Psoas muscle (tissue), 8 donors: ENCODE measurements at regions of chr1 and their contacts with region 1.

Region 1: DNA sequence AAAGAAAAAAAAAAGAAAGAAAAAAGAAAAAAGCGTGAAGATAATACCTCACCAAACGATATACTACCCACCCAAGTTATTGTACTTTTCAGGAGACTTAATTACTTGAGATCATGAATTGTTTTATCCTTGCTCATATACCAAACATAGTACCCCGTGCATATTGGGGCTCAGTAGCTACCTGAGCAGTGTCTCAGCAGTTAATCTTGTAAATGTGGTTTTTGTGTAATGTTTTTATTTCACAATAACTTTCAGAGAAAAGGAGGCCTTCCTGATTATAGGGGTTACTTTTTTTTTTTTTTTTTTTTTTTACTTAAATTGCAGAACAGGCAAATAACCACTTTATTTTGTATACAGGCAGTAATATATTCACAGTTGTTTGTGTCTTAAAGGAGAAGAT is 80.3 kb downstream of the OSBPL9 start:
- DNase-seq: no peak
- ATAC-seq: no peak
- H3K4me3 ChIP-seq: no peak overlapping the region
- H3K27ac ChIP-seq: no peak overlapping the region
- H3K4me1 ChIP-seq: peaks cover 45% of the 10 kb centered on the region
- H3K27me3 ChIP-seq: no peaks in the 10 kb centered on the region
- CTCF ChIP-seq: no peak

Region 2: DNA sequence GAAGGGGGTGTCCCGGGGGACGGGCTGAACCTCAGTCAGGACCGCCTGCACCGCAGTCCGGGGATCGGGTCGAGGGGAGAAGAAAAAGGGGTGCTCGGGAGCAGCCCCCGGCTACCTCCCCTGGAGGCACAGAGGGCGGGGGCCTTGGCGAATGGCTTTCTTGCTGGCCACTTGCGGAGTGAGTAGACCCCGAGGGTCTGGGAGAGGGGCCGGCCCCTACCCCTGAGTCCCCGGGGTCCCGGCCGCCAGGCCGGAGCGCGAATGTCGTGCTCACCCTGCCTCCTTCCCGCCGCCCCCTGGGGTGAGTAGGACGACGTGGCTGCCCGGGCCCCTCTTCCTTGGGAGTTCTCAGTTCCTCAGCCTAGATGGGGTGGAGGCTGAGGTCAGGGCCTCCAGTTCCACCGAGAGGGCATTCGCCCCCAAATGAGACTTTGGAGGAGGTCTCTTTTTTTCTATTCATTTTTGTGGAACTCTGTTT is 32.7 kb after region 1 on chr1:
- intact Hi-C with region 1: loop called in 1 of 2 experiments (anchors 5 kb)
- DNase-seq: no peak
- ATAC-seq: peak in 3 of 4 donors; percentile 7 to 14 (median 11)
- H3K4me3 ChIP-seq: peak overlapping the region; percentile 66
- H3K27ac ChIP-seq: peak overlapping the region; percentile 79
- H3K4me1 ChIP-seq: peaks cover 82% of the 10 kb centered on the region
- H3K27me3 ChIP-seq: no peaks in the 10 kb centered on the region
- CTCF ChIP-seq: no peak

Region 3: DNA sequence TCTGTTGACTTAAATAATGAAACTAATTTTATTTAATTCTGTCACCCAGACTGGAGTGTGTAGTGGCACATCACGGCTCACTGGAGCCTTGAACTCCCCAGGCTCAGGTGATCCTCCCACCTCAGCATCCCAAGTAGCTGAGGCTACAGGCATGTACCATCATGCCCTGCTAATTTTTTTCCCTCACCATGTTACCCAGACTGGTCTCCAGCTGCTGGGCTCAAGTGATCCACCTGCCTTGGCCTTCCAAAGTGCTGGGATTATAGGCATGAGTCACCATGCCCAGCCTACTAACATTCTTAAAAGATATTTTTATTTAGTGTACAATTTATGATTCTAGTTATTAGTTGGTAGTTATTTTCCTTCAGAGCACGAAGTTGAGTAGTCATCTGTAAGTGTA is 131.9 kb after region 1 on chr1:
- intact Hi-C with region 1: no loop called
- DNase-seq: no peak
- ATAC-seq: peak in 3 of 4 donors; percentile 46 to 70 (median 68)
- H3K4me3 ChIP-seq: no peak overlapping the region
- H3K27ac ChIP-seq: no peak overlapping the region
- H3K4me1 ChIP-seq: no peaks in the 10 kb centered on the region
- H3K27me3 ChIP-seq: no peaks in the 10 kb centered on the region
- CTCF ChIP-seq: no peak